ENCODE measurements at regions of chr14 and their contacts with region 1.

Region 1: GRCh38 chr14:63922696-63923421 is 70.1 kb downstream of the SYNE2 start:
- DNase-seq: peak; percentile 96
- H3K4me3 Mint-ChIP-seq: peak overlapping the region; percentile 60
- H3K27ac Mint-ChIP-seq: no peak overlapping the region
- H3K4me1 Mint-ChIP-seq: peaks cover 13% of the 10 kb centered on the region
- H3K27me3 Mint-ChIP-seq: no peaks in the 10 kb centered on the region
- CTCF ChIP-seq: no peak

Region 2: GRCh38 chr14:63863004-63863403 is 59.9 kb before region 1 on chr14:
- CTCF ChIA-PET with region 1: no interaction called
- POLR2A ChIA-PET with region 1: interaction called, 45 read pairs
- intact Hi-C with region 1: no loop called
- DNase-seq: no peak
- H3K4me3 Mint-ChIP-seq: no peak overlapping the region
- H3K27ac Mint-ChIP-seq: peak overlapping the region; percentile 40
- H3K4me1 Mint-ChIP-seq: peaks cover 12% of the 10 kb centered on the region
- H3K27me3 Mint-ChIP-seq: no peaks in the 10 kb centered on the region
- CTCF ChIP-seq: no peak

Region 3: DNA sequence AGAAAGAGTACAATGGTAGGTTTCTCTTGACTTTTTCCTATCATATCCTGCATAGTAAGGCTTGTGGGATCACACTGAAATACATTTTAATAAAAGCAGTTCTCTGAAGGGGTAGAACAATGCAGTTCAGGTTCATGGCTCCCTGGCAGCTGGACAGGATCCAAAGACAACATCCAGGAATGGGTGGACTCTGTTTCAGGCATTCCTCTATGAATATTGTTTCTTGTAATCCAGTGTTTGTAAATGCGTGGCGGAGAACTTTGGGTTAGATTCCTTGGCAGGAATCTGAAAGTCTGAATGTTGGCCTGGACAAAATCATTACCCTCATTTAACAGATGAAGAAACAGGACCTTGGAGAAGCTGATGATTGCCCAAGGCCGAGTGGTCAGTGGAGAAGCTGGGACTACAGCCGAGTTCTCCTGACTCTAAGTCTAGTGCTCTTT is 26.6 kb before region 1 on chr14:
- CTCF ChIA-PET with region 1: interaction called, 5 read pairs
- POLR2A ChIA-PET with region 1: interaction called, 26 read pairs
- intact Hi-C with region 1: no loop called
- DNase-seq: peak; percentile 96
- H3K4me3 Mint-ChIP-seq: no peak overlapping the region
- H3K27ac Mint-ChIP-seq: peak overlapping the region; percentile 47
- H3K4me1 Mint-ChIP-seq: peaks cover 43% of the 10 kb centered on the region
- H3K27me3 Mint-ChIP-seq: no peaks in the 10 kb centered on the region
- CTCF ChIP-seq: no peak

Region 4: GRCh38 chr14:63910583-63911363 is 12.1 kb before region 1 on chr14:
- CTCF ChIA-PET with region 1: interaction called, 3 read pairs
- POLR2A ChIA-PET with region 1: interaction called, 45 read pairs
- intact Hi-C with region 1: no loop called
- DNase-seq: no peak
- H3K4me3 Mint-ChIP-seq: no peak overlapping the region
- H3K27ac Mint-ChIP-seq: no peak overlapping the region
- H3K4me1 Mint-ChIP-seq: peaks cover 17% of the 10 kb centered on the region
- H3K27me3 Mint-ChIP-seq: no peaks in the 10 kb centered on the region
- CTCF ChIP-seq: no peak

Region 5: GRCh38 chr14:64005822-64006221 is 83.0 kb after region 1 on chr14:
- CTCF ChIA-PET with region 1: no interaction called
- POLR2A ChIA-PET with region 1: no interaction called
- intact Hi-C with region 1: no loop called
- DNase-seq: no peak
- H3K4me3 Mint-ChIP-seq: no peak overlapping the region
- H3K27ac Mint-ChIP-seq: no peak overlapping the region
- H3K4me1 Mint-ChIP-seq: no peaks in the 10 kb centered on the region
- H3K27me3 Mint-ChIP-seq: no peaks in the 10 kb centered on the region
- CTCF ChIP-seq: no peak